ENCODE measurements at regions of chr13 and their contacts with region 1.

Region 1: GRCh38 chr13:99214232-99214631 is 13.6 kb downstream of the UBAC2 start:
- DNase-seq: peak; percentile 84
- H3K4me3 Mint-ChIP-seq: peak overlapping the region; percentile 78
- H3K27ac Mint-ChIP-seq: peak overlapping the region; percentile 78
- H3K4me1 Mint-ChIP-seq: peaks cover 78% of the 10 kb centered on the region
- H3K27me3 Mint-ChIP-seq: no peaks in the 10 kb centered on the region

Region 2: DNA sequence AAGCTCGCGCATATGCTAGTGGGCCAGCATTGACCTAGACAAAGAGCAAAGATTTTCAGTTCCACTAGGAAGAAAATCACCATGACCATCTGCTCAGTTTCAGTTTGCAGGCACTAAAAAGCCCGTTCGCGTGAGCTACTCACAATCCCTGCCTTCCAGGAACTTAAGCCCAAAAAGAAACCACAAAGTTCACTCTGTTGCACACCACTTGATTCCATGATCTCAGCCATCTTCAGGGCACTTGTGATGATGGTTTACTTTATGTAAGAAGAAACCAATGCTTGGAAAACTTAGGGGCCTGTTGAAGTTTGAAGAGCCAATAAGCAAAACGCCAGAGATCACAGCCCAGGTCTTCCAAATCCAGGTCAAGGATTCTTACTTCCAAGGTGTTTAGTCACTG is 416.8 kb before region 1 on chr13:
- CTCF ChIA-PET with region 1: no interaction called
- POLR2A ChIA-PET with region 1: no interaction called
- intact Hi-C with region 1: no loop called
- DNase-seq: no peak
- H3K4me3 Mint-ChIP-seq: no peak overlapping the region
- H3K27ac Mint-ChIP-seq: no peak overlapping the region
- H3K4me1 Mint-ChIP-seq: no peaks in the 10 kb centered on the region
- H3K27me3 Mint-ChIP-seq: no peaks in the 10 kb centered on the region

Region 3: DNA sequence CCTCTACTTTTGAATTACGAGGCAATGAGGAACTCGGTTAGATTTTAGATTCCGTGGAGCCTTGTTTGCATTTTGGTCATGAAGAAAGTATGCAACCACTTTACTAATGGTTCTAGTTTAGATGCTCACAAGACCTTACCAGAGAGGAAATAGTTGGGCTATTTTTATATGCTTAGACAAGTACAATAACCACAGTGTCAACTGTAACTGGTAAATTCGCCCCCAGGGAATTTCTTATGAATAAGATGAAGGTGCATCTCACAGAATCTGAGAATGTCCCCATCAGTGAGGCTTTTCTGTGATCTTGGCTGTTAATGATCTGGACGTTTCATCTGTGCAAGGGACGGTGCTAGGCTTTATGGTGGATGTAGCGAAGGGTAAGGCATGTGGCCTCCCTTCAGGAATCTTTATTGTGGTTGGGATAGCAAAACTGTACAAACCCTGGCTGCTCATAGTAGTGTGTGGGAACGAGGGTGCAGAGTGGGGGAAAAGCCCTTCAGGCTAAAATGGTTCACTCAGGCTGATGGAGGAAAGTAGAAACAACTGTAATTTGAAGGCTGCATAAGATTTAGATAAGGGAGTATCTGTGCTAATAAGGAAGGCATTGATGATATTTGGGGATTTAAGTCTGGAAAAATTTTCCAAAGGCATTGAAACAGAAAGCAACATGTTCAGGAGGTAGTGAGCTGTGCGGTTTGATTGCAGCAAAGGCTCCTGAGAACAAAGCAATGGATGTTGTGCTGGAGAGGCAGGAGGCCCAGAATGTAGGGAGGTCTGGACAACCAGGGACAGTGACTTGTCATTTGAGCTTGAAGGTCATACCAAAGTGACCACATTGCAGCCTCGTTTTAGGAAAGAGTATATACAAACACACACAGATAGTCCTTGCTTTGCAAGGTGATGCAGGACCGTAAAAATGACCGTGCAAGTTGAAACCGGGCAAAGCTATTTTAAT is 14.8 kb after region 1 on chr13:
- CTCF ChIA-PET with region 1: interaction called, 5 read pairs
- POLR2A ChIA-PET with region 1: interaction called, 5 read pairs
- intact Hi-C with region 1: loop called (anchors 1 kb)
- DNase-seq: no peak
- H3K4me3 Mint-ChIP-seq: peak overlapping the region; percentile 64
- H3K27ac Mint-ChIP-seq: peak overlapping the region; percentile 68
- H3K4me1 Mint-ChIP-seq: peaks cover 71% of the 10 kb centered on the region
- H3K27me3 Mint-ChIP-seq: no peaks in the 10 kb centered on the region

Region 4: GRCh38 chr13:99237981-99238662 is 23.9 kb after region 1 on chr13:
- CTCF ChIA-PET with region 1: interaction called, 5 read pairs
- POLR2A ChIA-PET with region 1: no interaction called
- intact Hi-C with region 1: loop called (anchors 1 kb)
- DNase-seq: peak; percentile 61
- H3K4me3 Mint-ChIP-seq: peak overlapping the region; percentile 62
- H3K27ac Mint-ChIP-seq: peak overlapping the region; percentile 81
- H3K4me1 Mint-ChIP-seq: peaks cover 50% of the 10 kb centered on the region
- H3K27me3 Mint-ChIP-seq: no peaks in the 10 kb centered on the region

Region 5: DNA sequence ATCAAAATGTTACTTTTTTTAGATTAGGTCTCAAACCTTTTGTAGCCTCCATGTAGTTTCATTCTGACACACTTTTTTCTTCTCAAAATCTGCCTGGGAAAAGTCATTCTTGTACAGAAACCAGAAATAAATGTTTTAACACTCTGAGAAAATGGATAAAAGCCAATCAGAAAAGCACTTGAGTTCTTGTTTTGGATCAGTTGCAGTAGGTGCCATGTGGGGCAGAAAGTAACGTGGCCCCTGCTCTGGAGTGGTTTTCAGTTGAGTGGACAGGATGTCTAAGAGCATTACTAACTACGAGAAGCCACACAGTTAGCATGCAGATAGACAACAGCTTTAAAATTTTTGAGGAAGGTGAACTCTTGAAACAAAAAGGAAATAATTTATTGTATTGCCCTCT is 73.9 kb after region 1 on chr13:
- CTCF ChIA-PET with region 1: no interaction called
- POLR2A ChIA-PET with region 1: no interaction called
- intact Hi-C with region 1: loop called (anchors 2 kb)
- DNase-seq: peak; percentile 87
- H3K4me3 Mint-ChIP-seq: no peak overlapping the region
- H3K27ac Mint-ChIP-seq: peak overlapping the region; percentile 80
- H3K4me1 Mint-ChIP-seq: peaks cover 85% of the 10 kb centered on the region
- H3K27me3 Mint-ChIP-seq: no peaks in the 10 kb centered on the region

Measured in activated CD4-positive, alpha-beta memory T cell treated with anti-CD3 and anti-CD28 coated beads for 36 hours (primary cell).